GM23248 (cell line): ENCODE measurements at regions of chr17 and their contacts with region 1.

Region 1: DNA sequence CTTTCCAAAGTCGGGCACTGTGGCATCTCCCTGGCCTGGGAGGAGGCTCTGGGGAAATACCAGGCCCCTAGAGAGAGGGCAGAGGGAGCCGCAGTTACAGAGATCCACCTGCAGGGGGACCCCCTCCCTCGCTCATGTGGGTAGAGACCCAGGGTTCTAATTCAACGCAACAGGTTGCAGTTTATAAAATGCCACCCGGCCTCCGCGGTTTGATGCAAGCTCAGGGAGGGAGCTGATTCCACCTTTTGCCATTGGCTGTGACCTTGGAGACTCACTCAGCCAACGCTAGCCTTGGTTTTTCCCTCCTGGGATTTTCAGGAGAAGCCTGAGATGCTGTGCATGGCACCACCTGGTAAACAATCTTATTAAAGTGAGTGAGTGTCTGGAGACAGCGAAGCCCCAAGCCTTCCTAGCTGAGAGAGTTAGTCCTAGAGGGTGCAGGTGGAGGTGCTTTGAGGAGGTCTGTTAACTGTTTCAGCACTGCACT is 12.1 kb downstream of the TTLL6 start:
- DNase-seq: peak; percentile 56
- H3K4me3 ChIP-seq: no peak overlapping the region
- H3K27ac ChIP-seq: no peak overlapping the region
- H3K4me1 ChIP-seq: peaks cover 7% of the 10 kb centered on the region
- H3K27me3 ChIP-seq: no peaks in the 10 kb centered on the region

Region 2: GRCh38 chr17:48483471-48484131 is 321.4 kb before region 1 on chr17:
- in situ Hi-C with region 1: no loop called
- DNase-seq: peak; percentile 98
- H3K4me3 ChIP-seq: peak overlapping the region; percentile 43
- H3K27ac ChIP-seq: peak overlapping the region; percentile 94
- H3K4me1 ChIP-seq: peaks cover 52% of the 10 kb centered on the region
- H3K27me3 ChIP-seq: no peaks in the 10 kb centered on the region

Region 3: DNA sequence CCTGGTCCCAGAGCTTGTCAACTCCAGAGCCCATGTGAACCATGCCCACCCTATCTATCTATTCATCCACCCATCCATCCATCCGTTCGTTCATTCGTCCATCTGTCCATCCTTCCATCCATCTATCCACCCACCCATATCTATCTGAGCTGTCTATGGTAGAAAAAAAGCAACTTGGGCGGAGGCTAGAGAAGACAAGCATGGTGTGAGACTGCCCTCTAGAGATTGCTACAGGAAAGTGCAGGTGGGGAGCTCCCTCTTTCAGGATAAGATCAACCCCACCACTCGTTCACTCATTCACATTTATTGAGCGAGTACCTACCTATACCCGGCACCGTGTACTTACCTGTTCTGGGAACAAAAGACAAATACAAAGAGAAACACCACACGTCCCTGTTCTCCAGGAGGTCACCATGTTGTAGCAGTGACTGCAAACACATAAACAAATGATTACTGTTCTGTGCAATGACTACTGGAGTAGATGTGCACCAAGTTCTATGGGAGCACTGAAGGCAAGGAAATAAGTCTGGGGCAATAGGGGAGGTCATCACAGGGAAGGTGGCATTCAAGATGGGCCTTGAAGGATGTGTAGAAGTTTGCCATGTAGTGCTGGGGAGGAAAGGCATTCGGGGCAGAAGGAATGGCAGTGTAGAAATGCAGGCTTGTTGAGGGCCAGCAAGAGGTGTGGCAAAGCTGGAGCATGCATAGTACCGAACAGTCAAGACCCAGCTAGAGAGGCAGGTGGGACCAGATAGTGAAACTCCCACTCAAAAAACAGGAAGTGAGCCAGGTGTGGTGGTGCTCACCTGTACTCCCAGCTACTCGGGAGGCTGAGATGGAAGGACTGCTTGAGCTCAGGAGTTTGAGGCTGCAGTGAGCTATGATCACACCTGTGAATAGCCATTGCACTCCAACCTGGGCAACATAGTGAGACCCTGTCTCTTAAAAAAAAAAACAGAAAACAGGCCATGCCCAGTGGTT is 74.2 kb after region 1 on chr17:
- in situ Hi-C with region 1: loop called (anchors 5 kb)
- DNase-seq: peak; percentile 77
- H3K4me3 ChIP-seq: no peak overlapping the region
- H3K27ac ChIP-seq: no peak overlapping the region
- H3K4me1 ChIP-seq: no peaks in the 10 kb centered on the region
- H3K27me3 ChIP-seq: no peaks in the 10 kb centered on the region; the same call in 1 of the 2 replicates